ENCODE measurements at regions of chr9 and their contacts with region 1.

Region 1: DNA sequence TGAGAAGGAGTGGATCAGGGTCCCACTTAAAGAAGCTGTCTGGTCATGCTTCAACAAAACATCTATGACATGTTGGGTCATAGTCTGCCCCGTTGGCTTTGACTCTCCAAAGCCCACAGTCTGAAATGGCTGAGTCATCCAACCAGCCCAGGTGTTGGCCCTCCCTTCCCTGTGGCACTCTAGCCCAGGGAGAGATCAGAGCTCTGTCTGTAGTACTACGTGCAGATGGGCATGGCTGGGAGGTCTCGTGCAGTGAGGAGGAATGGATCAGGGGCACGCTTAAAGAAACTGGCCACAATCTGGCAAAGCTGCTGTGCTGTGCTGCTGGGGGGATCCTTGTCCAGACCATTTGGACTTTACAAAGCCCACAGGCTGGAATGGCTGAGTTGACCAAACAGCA is 206.1 kb downstream of the TUSC1 start:
- DNase-seq: no peak
- ATAC-seq: no peak

Region 2: DNA sequence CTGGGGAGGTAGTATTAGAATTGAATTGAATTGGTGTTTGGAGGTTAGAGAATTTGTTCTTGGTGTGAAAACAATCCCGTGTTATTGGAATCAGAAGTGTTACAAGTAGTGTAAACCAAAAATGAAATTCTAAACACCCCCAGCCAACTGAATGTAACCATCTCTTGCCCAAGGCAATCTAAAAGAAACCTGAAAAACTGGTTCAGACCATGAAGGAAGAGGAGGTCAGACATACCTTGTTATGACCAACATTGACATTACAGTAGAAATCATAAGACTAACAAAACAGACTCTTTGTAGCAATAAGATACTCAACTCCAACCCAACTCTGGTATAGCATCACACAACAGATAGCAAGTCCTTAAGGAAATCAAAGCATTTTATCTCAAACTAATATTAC is 47.2 kb after region 1 on chr9:
- intact Hi-C with region 1: loop called in 1 of 2 experiments (anchors 5 kb)
- DNase-seq: no peak
- ATAC-seq: no peak

Measured in left cardiac atrium (tissue), 4 donors.